Prostate gland (tissue), 2 donors: ENCODE measurements at regions of chr17 and their contacts with region 1.

Region 1: DNA sequence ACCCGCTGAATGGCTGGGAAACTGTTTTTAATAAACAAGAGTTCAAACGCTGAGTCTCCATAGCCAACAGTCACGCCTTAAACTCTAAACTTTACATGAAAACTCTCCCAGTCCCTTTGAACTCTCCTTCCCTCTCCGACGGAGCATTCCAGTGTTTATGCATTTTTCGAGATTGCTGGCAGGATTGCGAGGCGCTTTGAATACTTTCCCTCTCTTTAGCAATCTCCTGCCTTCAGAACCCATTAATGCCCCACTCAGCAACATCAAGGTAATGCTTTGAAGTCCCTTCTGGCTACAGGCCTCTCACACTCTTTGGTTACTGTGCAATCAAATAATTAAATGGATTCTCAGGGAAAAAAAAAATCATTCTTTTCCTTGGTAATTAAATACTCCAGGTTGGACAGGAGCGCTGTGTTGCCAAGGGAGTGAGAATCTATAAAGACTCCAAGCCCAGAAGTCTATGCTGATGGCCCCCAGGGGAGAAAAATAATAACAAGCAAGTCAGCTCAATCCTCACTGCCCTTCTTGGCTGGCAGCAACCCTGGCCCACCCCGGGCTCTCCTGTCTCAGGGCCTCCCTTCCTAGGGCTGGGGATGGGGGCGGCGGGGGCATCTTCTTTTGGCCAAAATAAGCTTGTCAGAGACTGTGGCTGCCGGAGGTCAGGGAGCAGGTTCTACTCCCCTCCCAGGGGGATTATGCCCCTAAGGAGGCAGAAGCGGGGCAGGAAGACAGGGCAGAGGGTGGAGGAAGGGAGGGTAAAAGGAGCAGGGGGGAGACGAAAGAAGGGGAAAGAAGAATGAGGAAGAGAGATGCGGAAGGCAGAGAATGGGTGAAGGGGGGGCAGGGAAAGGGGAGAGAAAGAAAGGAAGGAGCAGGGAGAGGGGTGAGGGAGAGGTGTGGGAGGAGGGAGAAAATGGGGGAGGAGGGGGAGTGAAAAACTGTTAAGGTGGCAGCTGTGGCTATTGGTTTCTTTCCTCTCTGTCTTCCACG is 45.2 kb downstream of the AXIN2 start:
- DNase-seq: no peak
- H3K4me3 ChIP-seq: no peak overlapping the region
- H3K27ac ChIP-seq: no peak overlapping the region
- H3K4me1 ChIP-seq: no peaks in the 10 kb centered on the region
- H3K27me3 ChIP-seq: no peaks in the 10 kb centered on the region
- CTCF ChIP-seq: no peak
- POLR2A ChIP-seq: no peak

Region 2: GRCh38 chr17:65463242-65463641 is 53.0 kb before region 1 on chr17:
- intact Hi-C with region 1: loop called (anchors 5 kb)
- DNase-seq: peak; percentile 13
- H3K4me3 ChIP-seq: no peak overlapping the region
- H3K27ac ChIP-seq: no peak overlapping the region
- H3K4me1 ChIP-seq: no peaks in the 10 kb centered on the region
- H3K27me3 ChIP-seq: no peaks in the 10 kb centered on the region
- CTCF ChIP-seq: no peak
- POLR2A ChIP-seq: no peak